Heart left ventricle (tissue), 16 donors: ENCODE measurements at regions of chr19 and their contacts with region 1.

Region 1: DNA sequence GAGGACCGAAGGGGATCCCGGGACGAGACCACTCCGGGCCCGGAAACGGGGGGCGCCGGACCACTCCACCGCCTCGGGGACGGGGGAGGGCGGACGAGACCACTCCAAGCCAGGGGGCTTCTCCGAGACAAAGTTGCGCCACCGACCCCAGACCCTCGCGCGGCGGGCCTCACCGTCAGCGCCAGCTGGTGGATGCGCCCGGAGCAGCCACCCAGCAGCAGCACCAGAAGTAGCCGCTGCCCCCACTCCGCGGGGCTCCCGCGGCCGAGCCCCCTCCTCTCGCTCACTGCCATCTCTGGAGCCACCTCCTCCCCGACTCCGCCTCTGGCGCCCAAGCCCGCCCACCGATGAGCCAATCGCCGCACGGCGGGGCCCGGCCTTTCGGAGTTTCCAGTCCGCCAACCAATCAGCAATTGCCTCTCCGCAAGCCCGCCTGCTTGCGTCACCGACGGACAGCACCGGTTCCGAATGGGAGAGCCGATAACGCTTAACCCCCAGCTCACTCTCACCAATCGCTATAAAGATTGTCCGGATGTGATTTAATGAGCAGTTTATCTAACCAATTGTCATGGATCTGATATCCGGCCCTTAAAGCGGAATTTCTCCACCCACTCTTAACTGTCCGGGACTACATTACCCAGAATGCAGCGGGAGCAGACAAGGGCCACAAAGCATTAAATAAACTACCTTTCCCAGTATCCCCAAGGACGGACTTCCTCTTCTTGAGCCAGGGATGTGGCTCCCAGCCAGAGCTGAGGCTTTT is at the start of gene GPR108:
- DNase-seq: peak; percentile 100
- ATAC-seq: peak; percentile 82 to 90 (median 86)
- H3K4me3 ChIP-seq: peak within 1 kb of the TSS; percentile 62 to 96 (median 84)
- H3K27ac ChIP-seq: peak within 1 kb of the TSS; percentile 95 to 100 (median 98)
- H3K4me1 ChIP-seq: peaks cover 6 to 58% (median 42%) of the 10 kb centered on the region in 12 donors
- H3K27me3 ChIP-seq: no peaks in the 10 kb centered on the region
- CTCF ChIP-seq: no peak
- POLR2A ChIP-seq: peak in 1 of 2 donors; percentile 55
- total RNA-seq, gene GPR108: 19.2 to 47.9 (median 27.7) TPM

Region 2: DNA sequence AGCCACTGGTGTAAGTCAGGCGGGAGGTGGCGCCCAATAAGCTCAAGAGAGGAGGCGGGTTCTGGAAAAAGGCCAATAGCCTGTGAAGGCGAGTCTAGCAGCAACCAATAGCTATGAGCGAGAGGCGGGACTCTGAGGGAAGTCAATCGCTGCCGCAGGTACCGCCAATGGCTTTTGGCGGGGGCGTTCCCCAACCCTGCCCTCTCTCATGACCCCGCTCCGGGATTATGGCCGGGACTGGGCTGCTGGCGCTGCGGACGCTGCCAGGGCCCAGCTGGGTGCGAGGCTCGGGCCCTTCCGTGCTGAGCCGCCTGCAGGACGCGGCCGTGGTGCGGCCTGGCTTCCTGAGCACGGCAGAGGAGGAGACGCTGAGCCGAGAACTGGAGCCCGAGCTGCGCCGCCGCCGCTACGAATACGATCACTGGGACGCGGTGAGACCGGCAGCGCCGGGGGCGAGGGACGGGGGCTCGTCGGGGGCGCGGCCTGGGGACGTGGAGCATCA is 364.8 kb before region 1 on chr19 and contains the start of gene ALKBH7:
- intact Hi-C with region 1: loop called in 2 of 10 experiments (anchors 5 to 10 kb)
- DNase-seq: peak; percentile 96 to 100 (median 100)
- ATAC-seq: peak; percentile 85 to 91 (median 89)
- H3K4me3 ChIP-seq: peak within 1 kb of the TSS; percentile 62 to 99 (median 74)
- H3K27ac ChIP-seq: peak within 1 kb of the TSS; percentile 87 to 100 (median 99)
- H3K4me1 ChIP-seq: peaks cover 0 to 20% (median 7%) of the 10 kb centered on the region in 12 donors
- H3K27me3 ChIP-seq: no peaks in the 10 kb centered on the region
- CTCF ChIP-seq: peak in 1 of 12 donors; percentile 25
- POLR2A ChIP-seq: peak in 1 of 2 donors; percentile 52
- total RNA-seq, gene ALKBH7: 92.4 to 214 (median 148) TPM

Region 3: DNA sequence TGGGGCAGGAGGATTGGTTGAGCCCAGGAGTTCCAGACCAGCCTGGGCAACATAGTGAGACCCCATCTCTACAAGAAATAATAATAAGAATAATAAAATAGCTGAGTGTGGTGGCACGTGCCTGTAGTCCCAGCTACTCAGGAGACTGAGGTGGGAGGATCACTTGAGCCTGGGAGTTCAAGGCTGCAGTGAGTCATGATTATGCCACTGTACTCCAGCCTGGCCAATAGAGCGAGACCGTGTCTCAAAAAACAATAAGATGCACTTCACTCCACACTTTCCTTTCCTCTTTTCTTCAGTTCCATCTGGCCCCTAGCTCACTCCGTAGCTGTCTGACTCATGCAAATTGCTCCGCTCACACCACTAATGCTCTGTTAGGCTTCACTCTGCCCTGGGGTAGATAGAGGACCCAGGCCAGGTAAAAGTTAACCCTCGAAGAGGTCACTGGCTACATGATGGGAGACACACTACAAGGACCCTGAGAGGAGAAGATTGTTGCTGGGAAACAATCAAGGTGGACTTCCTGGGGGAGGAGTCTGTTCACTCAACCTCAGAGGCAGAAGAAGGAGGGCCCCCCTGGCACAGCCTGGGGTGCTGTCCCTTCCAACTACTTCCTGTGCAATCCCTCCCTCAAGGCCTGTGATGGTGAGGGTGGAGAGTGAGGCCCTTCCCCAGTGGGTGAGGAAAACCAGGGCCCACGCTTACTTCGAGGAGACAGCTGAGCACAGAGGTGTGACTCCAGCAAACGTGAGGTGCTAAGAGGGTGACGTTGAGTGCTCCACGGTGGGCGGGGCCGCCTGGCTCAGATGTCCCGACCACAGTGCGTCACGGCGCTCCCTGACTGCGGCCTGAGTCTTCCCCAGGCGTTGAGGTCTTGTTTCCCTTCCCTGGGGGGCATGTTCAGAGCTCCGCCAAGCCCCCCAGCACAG is 215.5 kb before region 1 on chr19:
- intact Hi-C with region 1: loop called in 9 of 10 experiments (anchors 5 to 10 kb)
- DNase-seq: no peak
- ATAC-seq: peak in 1 of 4 donors; percentile 48
- H3K4me3 ChIP-seq: no peak overlapping the region
- H3K27ac ChIP-seq: no peak overlapping the region
- H3K4me1 ChIP-seq: peaks cover 0 to 20% (median 5%) of the 10 kb centered on the region in 12 donors
- H3K27me3 ChIP-seq: peaks cover 0 to 25% (median 0%) of the 10 kb centered on the region in 9 donors
- CTCF ChIP-seq: no peak
- POLR2A ChIP-seq: no peak

Region 4: DNA sequence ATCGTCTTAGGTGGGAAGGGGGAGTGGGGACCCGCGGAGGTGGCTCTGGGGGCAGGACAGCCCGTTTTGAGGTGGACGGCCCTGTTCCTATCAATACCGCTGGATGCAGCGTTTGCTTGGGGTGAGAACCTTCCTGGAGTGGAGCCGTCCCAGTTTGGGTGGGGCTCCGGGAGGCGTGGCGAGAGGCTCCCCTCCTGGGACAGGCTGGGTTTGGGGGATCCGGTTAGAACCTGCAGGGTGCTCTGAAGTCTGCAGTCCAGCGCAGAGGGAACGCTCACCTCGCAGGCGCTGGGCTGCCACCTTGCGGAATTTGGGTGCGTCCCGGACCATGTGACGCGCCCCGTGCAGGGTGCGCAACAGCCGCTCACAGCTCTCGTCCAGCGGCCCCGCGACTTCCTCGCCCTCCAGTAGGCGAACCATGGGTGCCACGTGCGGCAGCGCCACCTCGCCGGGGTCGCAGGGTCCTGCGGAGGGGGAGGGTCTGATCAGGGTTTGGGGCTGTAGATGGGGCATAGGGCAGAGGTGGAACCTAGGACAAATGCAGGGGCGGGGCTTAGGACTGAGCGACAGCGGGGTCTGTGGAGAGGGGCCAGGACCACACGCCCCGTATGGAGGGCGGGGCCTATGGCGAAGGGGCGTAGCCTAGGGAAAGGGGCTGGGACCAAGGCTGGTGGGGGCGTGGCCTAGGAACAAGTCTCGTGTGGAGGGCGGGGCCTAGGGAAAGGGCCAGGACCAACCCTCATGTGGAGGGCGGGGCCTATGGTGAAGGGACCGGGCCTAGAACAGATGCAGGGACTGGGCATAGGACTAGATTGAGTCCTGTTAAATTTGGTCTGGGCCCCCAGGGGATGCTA is 15.9 kb after region 1 on chr19:
- intact Hi-C with region 1: loop called in 1 of 10 experiments (anchors 1 kb)
- DNase-seq: peak; percentile 67 to 90 (median 81)
- ATAC-seq: peak; percentile 79 to 90 (median 85)
- H3K4me3 ChIP-seq: peak overlapping the region in 10 of 12 donors; percentile 39 to 56 (median 48)
- H3K27ac ChIP-seq: peak overlapping the region in 8 of 12 donors; percentile 9 to 72 (median 48)
- H3K4me1 ChIP-seq: peaks cover 0 to 16% (median 8%) of the 10 kb centered on the region in 12 donors
- H3K27me3 ChIP-seq: no peaks in the 10 kb centered on the region
- CTCF ChIP-seq: peak; percentile 29 to 64 (median 49)
- POLR2A ChIP-seq: no peak

Region 5: DNA sequence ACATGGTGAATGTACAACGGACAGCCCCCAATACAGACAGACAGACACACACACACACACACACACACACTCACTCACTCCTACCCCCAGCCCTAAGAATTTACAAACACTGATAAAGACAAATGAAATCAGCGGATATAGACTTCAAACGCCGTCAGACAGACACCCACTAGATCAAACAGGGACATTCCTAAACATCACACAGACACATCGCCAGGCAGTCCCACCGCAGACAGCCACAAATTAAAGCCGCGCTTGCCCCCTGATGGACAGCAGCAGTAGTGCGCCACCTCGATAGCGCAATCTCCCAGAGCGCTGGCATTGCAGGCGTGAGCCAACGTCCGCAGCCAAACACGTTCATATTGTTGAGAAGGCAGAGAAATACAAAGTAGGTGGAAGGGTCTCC is 125.2 kb after region 1 on chr19:
- intact Hi-C with region 1: loop called in 9 of 10 experiments (anchors 1 to 5 kb)
- DNase-seq: peak; percentile 68 to 89 (median 80)
- ATAC-seq: peak; percentile 69 to 96 (median 90)
- H3K4me3 ChIP-seq: peak overlapping the region in 10 of 12 donors; percentile 8 to 53 (median 34)
- H3K27ac ChIP-seq: peak overlapping the region in 1 of 12 donors; percentile 60
- H3K4me1 ChIP-seq: peaks cover 0 to 9% (median 5%) of the 10 kb centered on the region in 12 donors
- H3K27me3 ChIP-seq: peaks cover 0 to 23% (median 0%) of the 10 kb centered on the region in 9 donors
- CTCF ChIP-seq: peak; percentile 67 to 86 (median 80)
- POLR2A ChIP-seq: no peak